ENCODE measurements at regions of chr2 and their contacts with region 1.

Region 1: GRCh38 chr2:207503234-207503633 is 26.5 kb upstream of the CREB1 start:
- DNase-seq: peak; percentile 28
- ATAC-seq: no peak
- H3K4me3 Mint-ChIP-seq: no peak overlapping the region
- H3K27ac Mint-ChIP-seq: no peak overlapping the region
- H3K4me1 Mint-ChIP-seq: peaks cover 57% of the 10 kb centered on the region
- H3K27me3 Mint-ChIP-seq: no peaks in the 10 kb centered on the region

Region 2: DNA sequence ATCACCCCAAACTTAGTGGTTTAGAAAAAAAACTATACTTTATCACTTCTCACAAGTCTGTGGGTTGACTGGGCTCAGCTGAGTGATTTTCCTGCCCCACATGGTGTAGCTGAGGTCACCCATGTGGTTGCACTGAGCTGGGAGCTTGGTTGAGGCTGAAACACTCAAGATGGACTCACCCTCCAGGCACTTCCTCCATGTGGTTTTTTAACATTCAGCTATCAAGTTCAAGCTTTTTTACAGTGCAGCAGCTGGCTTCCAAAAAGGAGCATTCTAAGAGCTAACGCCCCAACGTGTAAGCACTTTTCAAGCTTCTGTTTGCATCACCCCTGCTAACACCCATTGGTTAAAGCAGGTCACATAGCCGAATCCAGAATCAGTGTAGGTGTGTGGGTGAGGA is 79.3 kb before region 1 on chr2:
- CTCF ChIA-PET with region 1: no interaction called
- POLR2A ChIA-PET with region 1: no interaction called
- intact Hi-C with region 1: no loop called
- DNase-seq: peak; percentile 66
- ATAC-seq: peak; percentile 98
- H3K4me3 Mint-ChIP-seq: no peak overlapping the region
- H3K27ac Mint-ChIP-seq: no peak overlapping the region
- H3K4me1 Mint-ChIP-seq: peaks cover 6% of the 10 kb centered on the region
- H3K27me3 Mint-ChIP-seq: no peaks in the 10 kb centered on the region

Region 3: DNA sequence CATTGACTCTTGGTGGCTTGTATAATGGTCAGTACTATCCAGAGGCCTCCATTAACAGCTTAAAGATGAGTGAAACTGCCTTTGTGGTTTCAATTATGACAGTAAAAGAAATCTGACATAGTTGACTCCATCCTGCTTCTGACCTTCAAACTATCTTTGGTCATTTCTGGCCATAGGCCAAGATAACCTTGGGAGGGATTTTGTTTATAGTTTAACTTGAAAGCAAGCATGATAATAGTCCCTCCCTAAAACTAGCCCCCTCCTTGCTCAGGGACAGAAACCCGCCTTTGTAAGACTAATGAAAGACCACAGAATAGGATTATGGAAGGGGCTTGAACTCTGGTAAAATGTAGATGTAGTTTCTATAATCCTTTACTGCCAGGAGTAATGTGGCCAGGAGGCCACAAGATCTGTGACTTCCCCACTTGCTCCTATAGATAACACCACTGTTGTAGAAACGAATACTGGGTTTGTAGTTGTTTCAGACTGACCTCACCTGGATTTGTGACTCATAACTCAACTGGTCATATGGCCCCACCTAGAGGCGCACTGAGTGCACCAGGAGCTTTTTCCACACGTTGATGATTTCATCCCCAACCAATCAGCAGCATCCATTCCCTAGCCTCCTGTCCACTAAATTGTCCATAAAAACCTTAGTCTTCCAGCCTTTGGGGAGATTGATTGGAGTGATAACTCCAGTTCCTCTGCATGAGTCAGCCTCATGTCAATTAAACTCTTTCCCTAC is 530.7 kb after region 1 on chr2:
- CTCF ChIA-PET with region 1: no interaction called
- POLR2A ChIA-PET with region 1: no interaction called
- intact Hi-C with region 1: loop called in 1 of 2 experiments (anchors 10 kb)
- DNase-seq: peak; percentile 64
- ATAC-seq: peak; percentile 93
- H3K4me3 Mint-ChIP-seq: no peak overlapping the region
- H3K27ac Mint-ChIP-seq: no peak overlapping the region
- H3K4me1 Mint-ChIP-seq: no peaks in the 10 kb centered on the region
- H3K27me3 Mint-ChIP-seq: no peaks in the 10 kb centered on the region